Breast epithelium (tissue), 4 donors: ENCODE measurements at regions of chr13 and their contacts with region 1.

Region 1: DNA sequence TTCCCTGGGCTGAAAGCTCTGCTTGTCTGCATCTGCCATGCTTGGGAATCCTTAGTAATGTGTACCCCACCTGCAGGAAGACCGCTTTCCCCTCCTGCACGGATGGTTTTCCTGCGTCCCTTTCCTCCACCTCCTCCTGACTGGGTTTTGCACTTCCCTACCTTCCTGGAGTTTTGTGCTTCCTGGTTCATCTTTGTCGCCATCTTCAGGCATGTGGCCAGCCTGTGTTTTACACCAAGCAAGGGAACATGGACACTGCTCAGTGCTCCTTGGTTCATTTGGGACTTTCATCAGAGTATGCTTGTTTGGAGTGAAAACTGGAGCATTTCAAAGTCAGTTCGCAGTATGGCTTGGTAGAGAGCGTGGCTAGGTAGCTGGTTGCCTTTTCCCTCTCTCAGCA is 30.7 kb downstream of the ERICH6B start:
- DNase-seq: no peak
- H3K4me3 ChIP-seq: no peak overlapping the region
- H3K27ac ChIP-seq: no peak overlapping the region
- H3K4me1 ChIP-seq: no peaks in the 10 kb centered on the region
- H3K27me3 ChIP-seq: no peaks in the 10 kb centered on the region
- CTCF ChIP-seq: no peak
- POLR2A ChIP-seq: no peak

Region 2: DNA sequence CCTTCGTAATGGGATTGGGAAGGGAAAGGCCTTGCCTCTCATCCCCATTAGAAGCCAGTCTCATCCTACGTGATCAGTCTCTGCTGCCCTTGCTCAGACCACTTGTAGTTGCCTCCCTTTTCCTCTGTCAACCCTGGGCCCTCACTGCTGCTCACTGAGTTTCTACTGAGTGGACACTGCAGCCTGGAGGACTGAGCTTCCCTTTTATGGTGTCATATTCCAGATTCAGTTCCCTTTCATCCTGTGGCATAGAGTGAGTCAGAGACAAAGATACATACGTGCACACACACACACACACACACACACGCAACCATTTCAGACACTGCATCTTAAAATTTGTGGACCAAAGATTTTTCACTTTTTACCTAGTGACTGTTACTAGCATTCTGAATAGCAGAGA is 63.5 kb before region 1 on chr13:
- intact Hi-C with region 1: no loop called
- DNase-seq: no peak
- H3K4me3 ChIP-seq: no peak overlapping the region
- H3K27ac ChIP-seq: no peak overlapping the region
- H3K4me1 ChIP-seq: no peaks in the 10 kb centered on the region
- H3K27me3 ChIP-seq: no peaks in the 10 kb centered on the region
- CTCF ChIP-seq: no peak
- POLR2A ChIP-seq: no peak

Region 3: DNA sequence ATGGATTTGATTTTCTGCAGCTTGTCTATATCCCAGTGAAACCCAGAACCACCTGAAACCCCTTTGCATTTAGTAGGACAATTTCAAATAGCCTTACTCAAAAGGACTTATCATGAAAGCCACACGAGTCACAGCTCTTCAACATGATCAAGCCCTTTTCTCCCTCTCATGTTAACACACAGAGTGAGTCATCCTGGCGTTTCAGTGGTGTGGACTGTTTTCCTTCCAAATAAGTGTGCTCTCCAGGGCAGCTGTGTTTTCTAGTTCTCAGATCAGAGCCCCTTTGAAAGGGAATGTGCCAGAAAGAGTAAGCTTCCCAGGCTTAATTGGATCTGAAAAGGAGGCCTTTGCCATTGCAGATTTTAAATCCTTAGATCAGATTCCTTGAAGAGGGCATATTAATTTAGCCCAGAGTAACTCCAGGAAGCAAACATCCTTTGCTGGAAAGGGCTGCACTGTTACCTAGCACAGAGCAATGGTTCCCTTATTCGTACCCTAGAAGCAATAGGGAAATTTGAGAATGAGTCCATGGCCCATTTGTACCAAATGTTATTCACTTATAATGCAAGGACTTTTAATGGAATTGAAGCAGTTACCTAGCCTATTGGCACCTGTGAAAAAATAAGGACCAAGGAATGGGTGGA is 20.6 kb before region 1 on chr13:
- intact Hi-C with region 1: no loop called
- DNase-seq: no peak
- H3K4me3 ChIP-seq: no peak overlapping the region
- H3K27ac ChIP-seq: no peak overlapping the region
- H3K4me1 ChIP-seq: no peaks in the 10 kb centered on the region
- H3K27me3 ChIP-seq: no peaks in the 10 kb centered on the region
- CTCF ChIP-seq: no peak
- POLR2A ChIP-seq: no peak

Region 4: GRCh38 chr13:45823591-45823990 is 238.8 kb after region 1 on chr13:
- intact Hi-C with region 1: loop called (anchors 5 kb)
- DNase-seq: no peak
- H3K4me3 ChIP-seq: no peak overlapping the region
- H3K27ac ChIP-seq: no peak overlapping the region
- H3K4me1 ChIP-seq: no peaks in the 10 kb centered on the region
- H3K27me3 ChIP-seq: no peaks in the 10 kb centered on the region
- CTCF ChIP-seq: no peak
- POLR2A ChIP-seq: no peak